Body of pancreas (tissue), 4 donors: ENCODE measurements at regions of chr9 and their contacts with region 1.

Region 1: GRCh38 chr9:4366591-4367330 is 66.9 kb upstream of the GLIS3 start:
- DNase-seq: peak; percentile 57 to 66 (median 62)
- ATAC-seq: peak; percentile 60
- H3K4me3 ChIP-seq: no peak overlapping the region
- H3K27ac ChIP-seq: no peak overlapping the region
- H3K4me1 ChIP-seq: no peaks in the 10 kb centered on the region
- H3K27me3 ChIP-seq: no peaks in the 10 kb centered on the region
- CTCF ChIP-seq: peak; percentile 56 to 85 (median 77)
- POLR2A ChIP-seq: no peak

Region 2: GRCh38 chr9:3732077-3733038 is 634.4 kb before region 1 on chr9:
- intact Hi-C with region 1: loop called (anchors 5 kb)
- DNase-seq: peak; percentile 28 to 74 (median 52)
- ATAC-seq: peak; percentile 98
- H3K4me3 ChIP-seq: no peak overlapping the region
- H3K27ac ChIP-seq: peak overlapping the region in 2 of 4 donors; percentile 41 to 60
- H3K4me1 ChIP-seq: no peaks in the 10 kb centered on the region
- H3K27me3 ChIP-seq: no peaks in the 10 kb centered on the region
- CTCF ChIP-seq: peak; percentile 35 to 85 (median 71)
- POLR2A ChIP-seq: no peak

Region 3: GRCh38 chr9:4243113-4243512 is 123.6 kb before region 1 on chr9:
- intact Hi-C with region 1: no loop called
- DNase-seq: no peak
- ATAC-seq: no peak
- H3K4me3 ChIP-seq: no peak overlapping the region
- H3K27ac ChIP-seq: peak overlapping the region in 3 of 4 donors; percentile 1 to 17 (median 3)
- H3K4me1 ChIP-seq: peaks cover 4% of the 10 kb centered on the region
- H3K27me3 ChIP-seq: no peaks in the 10 kb centered on the region
- CTCF ChIP-seq: no peak
- POLR2A ChIP-seq: no peak

Region 4: GRCh38 chr9:4315582-4316215 is 51.1 kb before region 1 on chr9:
- intact Hi-C with region 1: loop called (anchors 10 kb)
- DNase-seq: peak; percentile 79 to 88 (median 82)
- ATAC-seq: peak; percentile 95
- H3K4me3 ChIP-seq: no peak overlapping the region
- H3K27ac ChIP-seq: no peak overlapping the region
- H3K4me1 ChIP-seq: no peaks in the 10 kb centered on the region
- H3K27me3 ChIP-seq: no peaks in the 10 kb centered on the region
- CTCF ChIP-seq: peak; percentile 64 to 89 (median 85)
- POLR2A ChIP-seq: no peak